Common myeloid progenitor, CD34-positive (primary cell): ENCODE measurements at regions of chr14 and their contacts with region 1.

Region 1: GRCh38 chr14:49620182-49621113 is at the starts of genes MGAT2 and RPL36AL:
- DNase-seq: peak; percentile 97
- H3K4me3 ChIP-seq: peak within 1 kb of the TSS; percentile 75 to 99 (median 95)
- H3K27ac ChIP-seq: peak within 1 kb of the TSS; percentile 96 to 99
- H3K4me1 ChIP-seq: peaks cover 17 to 48% (median 35%) of the 10 kb centered on the region in 4 experiments
- H3K27me3 ChIP-seq: no peaks in the 10 kb centered on the region

Region 2: DNA sequence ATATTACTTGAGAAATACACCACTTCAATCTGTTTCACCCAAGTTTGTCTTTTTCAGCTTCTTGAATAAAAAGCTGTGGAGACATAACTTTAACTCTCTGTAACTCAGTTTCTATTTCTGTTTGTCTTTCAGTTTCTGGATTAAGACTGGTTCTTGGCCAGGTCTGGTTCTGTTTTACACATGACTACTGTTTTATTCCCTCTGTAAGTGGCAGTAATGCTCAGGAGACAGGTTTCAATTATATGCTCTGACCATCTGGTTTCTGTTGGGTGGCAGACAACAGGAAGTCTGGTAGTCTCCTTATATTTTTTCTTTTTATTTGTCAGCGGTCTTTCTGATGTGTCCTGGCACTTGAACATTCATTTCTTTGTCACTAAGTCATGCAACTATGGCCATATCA is 137.2 kb before region 1 on chr14:
- CTCF ChIA-PET with region 1: no interaction called
- POLR2A ChIA-PET with region 1: no interaction called
- DNase-seq: peak in 2 of 3 donors; percentile 28 to 51
- H3K4me3 ChIP-seq: peak overlapping the region in 1 of 7 experiments; percentile 28
- H3K27ac ChIP-seq: no peak overlapping the region
- H3K4me1 ChIP-seq: peaks cover 8 to 21% (median 15%) of the 10 kb centered on the region in 4 experiments
- H3K27me3 ChIP-seq: no peaks in the 10 kb centered on the region

Region 3: GRCh38 chr14:49585803-49586672 is 34.4 kb before region 1 on chr14 and contains the start of gene RPS29:
- CTCF ChIA-PET with region 1: interaction called, 28 read pairs
- POLR2A ChIA-PET with region 1: interaction called, 25 read pairs
- DNase-seq: peak; percentile 99 to 100 (median 99)
- H3K4me3 ChIP-seq: peak within 1 kb of the TSS; percentile 87 to 100 (median 98)
- H3K27ac ChIP-seq: peak within 1 kb of the TSS; percentile 96 to 98
- H3K4me1 ChIP-seq: peaks cover 13 to 25% (median 16%) of the 10 kb centered on the region in 4 experiments
- H3K27me3 ChIP-seq: no peaks in the 10 kb centered on the region

Region 4: GRCh38 chr14:49598485-49599300 is 21.8 kb before region 1 on chr14 and contains the start of gene LRR1:
- CTCF ChIA-PET with region 1: interaction called, 10 read pairs
- POLR2A ChIA-PET with region 1: interaction called, 16 read pairs
- DNase-seq: peak; percentile 80 to 91 (median 87)
- H3K4me3 ChIP-seq: peak within 1 kb of the TSS; percentile 88 to 98 (median 95)
- H3K27ac ChIP-seq: peak within 1 kb of the TSS; percentile 97 to 99
- H3K4me1 ChIP-seq: peaks cover 18 to 48% (median 32%) of the 10 kb centered on the region in 4 experiments
- H3K27me3 ChIP-seq: no peaks in the 10 kb centered on the region